Natural killer cell (primary cell): ENCODE measurements at regions of chr12 and their contacts with region 1.

Region 1: DNA sequence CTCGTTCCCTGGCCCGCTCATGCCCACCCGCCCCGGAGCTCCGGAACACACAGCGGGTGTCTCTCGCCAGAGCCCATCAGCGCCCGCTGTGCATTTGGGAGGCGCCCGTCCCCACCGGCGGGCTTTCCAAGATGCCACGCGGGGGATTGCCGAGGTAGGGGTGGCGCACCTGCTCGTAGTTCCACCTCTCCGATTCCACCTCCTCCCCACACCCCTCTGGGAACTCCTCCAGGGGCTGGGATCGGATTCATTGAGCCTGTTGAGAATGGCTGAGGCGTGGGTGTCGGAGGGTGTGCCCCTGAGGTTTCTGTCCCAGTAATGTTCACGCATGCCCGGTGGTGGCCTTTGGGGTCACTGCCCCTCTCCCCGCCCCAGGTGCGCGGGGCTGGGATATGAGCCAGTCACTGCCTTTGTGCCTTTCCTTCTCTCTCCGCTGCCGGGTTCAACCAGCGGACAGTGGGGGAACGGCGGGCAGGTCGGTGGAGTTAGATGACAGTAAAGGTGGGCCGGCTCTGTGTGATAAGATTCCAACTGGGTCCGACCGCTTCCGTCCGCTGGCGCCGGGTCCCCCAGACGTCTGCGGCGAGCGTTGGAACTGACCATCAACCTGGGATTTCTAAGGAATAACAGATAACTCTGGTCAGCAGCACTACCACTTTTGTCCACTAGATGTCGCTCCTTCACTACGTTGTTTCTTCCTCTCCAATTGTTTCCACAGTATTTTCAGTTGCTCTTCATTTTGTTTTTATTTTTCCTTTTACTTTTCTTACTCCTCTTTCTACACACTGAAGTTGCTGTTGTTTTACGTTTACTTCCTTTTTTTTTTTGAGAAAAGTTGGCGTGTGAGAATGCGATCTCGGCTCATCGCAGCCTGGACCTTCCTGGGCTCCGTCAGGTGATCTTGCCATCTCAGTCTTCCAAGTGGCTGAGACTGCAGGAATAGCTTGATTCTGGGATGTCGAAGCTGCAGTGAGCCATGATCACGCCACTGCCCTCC is 178.1 kb upstream of the ALG10B start:
- DNase-seq: peak; percentile 36 to 79
- ATAC-seq: peak; percentile 57 to 75 (median 64)
- H3K4me3 ChIP-seq: no peak overlapping the region
- H3K4me3 Mint-ChIP-seq: peak overlapping the region; percentile 26
- H3K27ac ChIP-seq: no peak overlapping the region
- H3K27ac Mint-ChIP-seq: peak overlapping the region in 1 of 2 donors; percentile 35
- H3K4me1 ChIP-seq: peaks cover 9% of the 10 kb centered on the region
- H3K4me1 Mint-ChIP-seq: peaks cover 4 to 6% of the 10 kb centered on the region in 2 donors
- H3K27me3 ChIP-seq: peaks cover 8% of the 10 kb centered on the region
- H3K27me3 Mint-ChIP-seq: no peaks in the 10 kb centered on the region
- CTCF ChIP-seq: peak; percentile 99

Region 2: GRCh38 chr12:38316391-38317129 is 178.0 kb after region 1 on chr12 and contains the start of gene ALG10B:
- intact Hi-C with region 1: loop called (anchors 1 kb)
- DNase-seq: peak; percentile 88 to 98
- ATAC-seq: peak; percentile 96 to 98 (median 98)
- H3K4me3 ChIP-seq: peak within 1 kb of the TSS; percentile 94
- H3K4me3 Mint-ChIP-seq: peak within 1 kb of the TSS; percentile 93
- H3K27ac ChIP-seq: peak within 1 kb of the TSS; percentile 95
- H3K27ac Mint-ChIP-seq: peak within 1 kb of the TSS; percentile 94 to 95
- H3K4me1 ChIP-seq: peaks cover 7% of the 10 kb centered on the region
- H3K4me1 Mint-ChIP-seq: peaks cover 22 to 26% of the 10 kb centered on the region in 2 donors
- H3K27me3 ChIP-seq: no peaks in the 10 kb centered on the region
- H3K27me3 Mint-ChIP-seq: no peaks in the 10 kb centered on the region
- CTCF ChIP-seq: peak; percentile 59
- total RNA-seq, gene ALG10B: 7.5 to 11.6 (median 8.0) TPM

Region 3: GRCh38 chr12:39103552-39104165 is 965.1 kb after region 1 on chr12:
- intact Hi-C with region 1: loop called (anchors 10 kb)
- DNase-seq: peak in 1 of 2 donors; percentile 64
- ATAC-seq: peak; percentile 57 to 70 (median 62)
- H3K4me3 ChIP-seq: no peak overlapping the region
- H3K4me3 Mint-ChIP-seq: no peak overlapping the region
- H3K27ac ChIP-seq: no peak overlapping the region
- H3K27ac Mint-ChIP-seq: no peak overlapping the region
- H3K4me1 ChIP-seq: no peaks in the 10 kb centered on the region
- H3K4me1 Mint-ChIP-seq: peaks cover 0 to 6% of the 10 kb centered on the region in 2 donors
- H3K27me3 ChIP-seq: no peaks in the 10 kb centered on the region
- H3K27me3 Mint-ChIP-seq: no peaks in the 10 kb centered on the region
- CTCF ChIP-seq: peak; percentile 60

Region 4: DNA sequence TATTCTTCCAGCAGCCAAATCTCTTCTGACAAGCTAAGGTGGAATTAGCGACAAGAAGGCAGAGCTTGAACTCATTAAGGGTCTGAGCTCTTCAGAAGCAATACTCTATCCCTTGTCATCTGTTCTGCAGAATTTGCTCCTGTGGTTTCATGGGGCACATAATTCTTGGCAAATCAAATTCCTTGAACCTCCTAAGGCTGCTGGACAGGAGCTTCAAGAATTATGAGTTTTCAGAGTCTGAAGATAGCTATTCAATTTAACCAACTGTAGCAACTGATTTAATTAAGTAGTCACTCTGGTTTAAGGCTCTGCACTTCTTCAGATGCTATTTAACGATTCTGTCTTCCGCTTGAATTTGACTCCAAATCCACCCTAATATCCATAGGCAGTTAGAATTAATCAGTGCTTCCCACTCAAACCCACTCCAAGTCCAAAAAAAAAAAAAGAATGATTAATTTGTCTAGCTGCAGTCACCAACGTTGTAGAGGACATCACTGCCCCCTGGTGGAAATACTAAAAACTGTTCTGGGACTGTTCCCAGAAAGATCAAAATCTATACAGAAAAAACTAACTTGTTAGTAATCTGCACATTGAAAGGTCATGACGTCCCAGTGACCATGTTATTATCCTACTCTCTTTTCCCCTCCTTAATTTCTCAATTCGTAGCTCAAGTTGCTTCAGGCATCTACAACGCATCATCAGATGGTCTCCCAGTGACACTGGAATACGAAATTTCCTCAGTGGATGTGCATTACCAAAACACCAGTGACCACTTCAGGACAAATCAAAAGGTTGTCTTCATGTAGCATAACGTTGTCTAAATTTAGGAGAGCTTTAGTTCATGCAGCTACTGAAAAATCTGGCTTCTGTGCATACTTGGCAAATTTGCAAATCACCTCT is 1134.6 kb after region 1 on chr12:
- intact Hi-C with region 1: loop called (anchors 2 kb)
- DNase-seq: peak in 1 of 2 donors; percentile 57
- ATAC-seq: peak in 2 of 3 donors; percentile 42 to 50
- H3K4me3 ChIP-seq: no peak overlapping the region
- H3K4me3 Mint-ChIP-seq: no peak overlapping the region
- H3K27ac ChIP-seq: no peak overlapping the region
- H3K27ac Mint-ChIP-seq: no peak overlapping the region
- H3K4me1 ChIP-seq: no peaks in the 10 kb centered on the region
- H3K4me1 Mint-ChIP-seq: peaks cover 4 to 5% of the 10 kb centered on the region in 2 donors
- H3K27me3 ChIP-seq: no peaks in the 10 kb centered on the region
- H3K27me3 Mint-ChIP-seq: peaks cover 0 to 9% of the 10 kb centered on the region in 2 donors
- CTCF ChIP-seq: peak; percentile 74